ENCODE measurements at regions of chr20 and their contacts with region 1.

Region 1: GRCh38 chr20:5950271-5951031 is at the starts of genes MCM8 and TRMT6:
- DNase-seq: peak; percentile 85 to 97 (median 86)
- ATAC-seq: peak; percentile 98
- H3K4me3 ChIP-seq: peak within 1 kb of the TSS; percentile 64
- H3K27ac ChIP-seq: peak within 1 kb of the TSS; percentile 80
- H3K4me1 ChIP-seq: peaks cover 0 to 9% of the 10 kb centered on the region in 2 experiments; a peak in 1 of 5 replicates
- H3K27me3 ChIP-seq: no peaks in the 10 kb centered on the region
- CTCF ChIP-seq: no peak
- EP300 ChIP-seq: no peak
- POLR2A ChIP-seq: peak; percentile 84
- RAD21 ChIP-seq: no peak
- polyA plus RNA-seq, gene MCM8: 4.5 to 9.0 TPM
- polyA plus RNA-seq, gene TRMT6: 10.6 to 13.5 TPM

Region 2: GRCh38 chr20:5448449-5449118 is 501.9 kb before region 1 on chr20:
- CTCF ChIA-PET with region 1: no interaction called
- POLR2A ChIA-PET with region 1: no interaction called
- in situ Hi-C with region 1: no loop called
- intact Hi-C with region 1: no loop called
- DNase-seq: peak; percentile 29 to 56 (median 47)
- ATAC-seq: peak; percentile 72
- H3K4me3 ChIP-seq: no peak overlapping the region
- H3K27ac ChIP-seq: no peak overlapping the region
- H3K4me1 ChIP-seq: no peaks in the 10 kb centered on the region
- H3K27me3 ChIP-seq: no peaks in the 10 kb centered on the region
- CTCF ChIP-seq: peak; percentile 54 to 59 (median 58); a peak in 5 of 6 replicates
- EP300 ChIP-seq: no peak
- POLR2A ChIP-seq: no peak
- RAD21 ChIP-seq: peak; percentile 24 to 60

Region 3: GRCh38 chr20:6074145-6074561 is 123.7 kb after region 1 on chr20:
- CTCF ChIA-PET with region 1: no interaction called
- POLR2A ChIA-PET with region 1: no interaction called
- in situ Hi-C with region 1: no loop called
- intact Hi-C with region 1: loop called (anchors 10 kb)
- DNase-seq: peak in 3 of 4 experiments; percentile 18 to 48 (median 37)
- ATAC-seq: peak; percentile 89
- H3K4me3 ChIP-seq: no peak overlapping the region
- H3K27ac ChIP-seq: no peak overlapping the region
- H3K4me1 ChIP-seq: peaks cover 0 to 9% of the 10 kb centered on the region in 2 experiments; a peak in 2 of 5 replicates
- H3K27me3 ChIP-seq: peaks cover 0 to 2% of the 10 kb centered on the region in 2 experiments; a peak in 1 of 5 replicates
- CTCF ChIP-seq: peak; percentile 34 to 46 (median 43); a peak in 5 of 6 replicates
- EP300 ChIP-seq: no peak
- POLR2A ChIP-seq: no peak
- RAD21 ChIP-seq: peak in 1 of 2 experiments; percentile 69; a peak in 2 of 4 replicates

Region 4: GRCh38 chr20:6355754-6356451 is 405.5 kb after region 1 on chr20:
- CTCF ChIA-PET with region 1: no interaction called
- POLR2A ChIA-PET with region 1: no interaction called
- in situ Hi-C with region 1: no loop called
- intact Hi-C with region 1: no loop called
- DNase-seq: no peak
- ATAC-seq: no peak
- H3K4me3 ChIP-seq: no peak overlapping the region
- H3K27ac ChIP-seq: no peak overlapping the region
- H3K4me1 ChIP-seq: no peaks in the 10 kb centered on the region
- H3K27me3 ChIP-seq: no peaks in the 10 kb centered on the region
- CTCF ChIP-seq: no peak
- EP300 ChIP-seq: no peak
- POLR2A ChIP-seq: no peak
- RAD21 ChIP-seq: no peak